Activated T-helper 1 cell treated with anti-CD3 and anti-CD28 coated beads, Interleukin-12 subunit alpha, Interleukin-12 subunit beta, Interleukin-2, Interleukin-4 antibody, amounts not matched to agents 30 ng/mL and 10 ng/mL and 1 ng/mL, durations not matched to agents 14 hours and 24 hours and 36 hours (primary cell): ENCODE measurements at regions of chr5 and their contacts with region 1.

Region 1: GRCh38 chr5:142922223-142922952 is 152.2 kb downstream of the ARHGAP26 start:
- DNase-seq: no peak
- H3K4me3 Mint-ChIP-seq: no peak overlapping the region
- H3K27ac Mint-ChIP-seq: no peak overlapping the region
- H3K4me1 Mint-ChIP-seq: peaks cover 49% of the 10 kb centered on the region
- H3K27me3 Mint-ChIP-seq: no peaks in the 10 kb centered on the region

Region 2: DNA sequence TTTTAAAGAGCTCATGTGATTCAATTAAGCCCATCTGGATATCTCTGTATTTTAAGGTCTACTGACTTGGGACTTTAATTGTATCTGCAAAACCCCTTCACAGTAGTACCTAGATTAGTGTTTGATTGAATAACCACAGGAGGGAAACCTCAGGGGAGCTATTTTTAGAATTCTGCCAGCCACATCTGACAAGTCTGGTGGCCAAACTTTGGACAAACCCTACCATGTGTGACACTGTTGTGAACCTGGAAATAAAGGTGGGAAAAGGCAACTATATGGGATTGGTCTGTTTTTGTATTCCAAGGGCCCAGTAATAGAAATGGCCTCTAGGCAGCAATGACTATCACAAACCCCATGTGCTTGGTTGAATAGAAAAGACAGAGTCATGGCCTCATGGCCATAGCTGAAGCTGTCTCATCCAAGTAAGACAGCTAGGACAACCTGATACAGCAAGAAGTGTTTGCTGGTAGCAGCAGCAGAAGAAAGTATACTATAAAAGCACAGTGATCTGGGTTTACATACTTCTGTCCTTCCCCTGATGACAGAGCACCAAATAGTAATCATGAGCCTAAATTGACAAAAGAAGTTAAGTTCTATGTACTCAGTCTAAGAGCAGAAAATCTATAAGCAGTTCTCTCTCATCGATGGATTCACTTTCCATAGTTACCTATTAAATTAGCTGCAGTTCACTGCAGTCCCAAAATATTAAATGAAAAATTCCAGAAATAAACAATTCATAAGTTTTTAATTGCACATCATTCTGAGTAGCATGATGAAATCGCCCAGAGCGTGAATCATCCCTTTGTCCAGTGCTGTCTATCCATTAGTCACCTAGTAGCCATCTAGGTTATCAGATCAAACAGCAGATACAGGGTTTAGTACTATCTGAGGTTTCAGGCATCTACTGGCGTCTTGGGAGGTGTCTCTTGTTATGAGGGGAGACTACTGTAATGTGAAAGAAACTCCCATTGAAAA is 37.6 kb after region 1 on chr5:
- intact Hi-C with region 1: loop called (anchors 2 kb)
- DNase-seq: no peak
- H3K4me3 Mint-ChIP-seq: no peak overlapping the region
- H3K27ac Mint-ChIP-seq: no peak overlapping the region
- H3K4me1 Mint-ChIP-seq: peaks cover 42% of the 10 kb centered on the region
- H3K27me3 Mint-ChIP-seq: no peaks in the 10 kb centered on the region

Region 3: GRCh38 chr5:143093452-143094086 is 171.2 kb after region 1 on chr5:
- intact Hi-C with region 1: loop called (anchors 1 kb)
- DNase-seq: no peak
- H3K4me3 Mint-ChIP-seq: peak overlapping the region; percentile 38
- H3K27ac Mint-ChIP-seq: peak overlapping the region; percentile 73
- H3K4me1 Mint-ChIP-seq: peaks cover 44% of the 10 kb centered on the region
- H3K27me3 Mint-ChIP-seq: no peaks in the 10 kb centered on the region